Activated CD4-positive, alpha-beta T cell treated with anti-CD3 and anti-CD28 coated beads for 36 hours (primary cell): ENCODE measurements at regions of chr9 and their contacts with region 1.

Region 1: DNA sequence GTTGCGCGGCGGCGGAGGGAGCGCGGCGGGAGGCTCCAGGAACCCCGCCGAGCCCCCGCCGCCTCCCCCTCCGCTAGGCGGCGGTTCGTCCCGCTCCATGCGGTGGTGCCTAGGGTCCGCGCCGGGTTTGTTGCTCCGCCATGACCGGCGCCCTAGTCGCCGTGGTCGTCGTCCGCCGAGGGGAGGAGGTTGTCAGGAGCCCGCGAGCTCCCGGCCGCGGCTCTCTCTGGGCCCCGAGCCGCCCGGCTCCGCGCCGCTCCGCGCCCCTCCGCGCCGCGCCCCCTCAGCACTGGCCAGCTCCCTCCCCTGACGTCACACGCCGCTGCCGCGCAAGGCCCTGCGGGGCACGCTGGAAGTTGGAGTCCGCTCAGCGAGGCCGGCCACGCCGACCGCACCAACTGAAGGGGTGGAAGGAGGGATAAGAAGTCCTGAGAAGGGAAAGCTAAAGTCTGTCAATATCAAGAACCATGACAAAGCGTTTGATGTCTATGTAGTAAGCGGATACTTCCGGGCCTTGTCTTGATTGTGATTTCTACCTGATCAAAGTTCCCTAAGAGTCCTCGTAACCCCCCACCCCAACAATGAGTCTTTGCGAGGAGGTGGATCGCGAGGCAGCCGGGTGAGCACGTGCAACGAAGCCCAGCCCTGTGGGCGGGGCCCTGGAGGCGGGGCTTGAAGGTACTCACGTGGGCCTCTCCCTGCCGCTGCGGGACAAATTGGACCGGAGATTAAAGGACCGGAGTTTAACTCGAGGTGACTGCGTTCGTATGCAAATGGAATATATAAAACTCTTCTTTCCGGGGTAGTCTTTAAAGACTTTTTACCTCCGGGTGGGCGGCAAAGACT is at the start of gene NR6A1:
- DNase-seq: peak; percentile 97
- ATAC-seq: peak; percentile 90
- H3K4me3 Mint-ChIP-seq: peak within 1 kb of the TSS; percentile 80
- H3K27ac Mint-ChIP-seq: peak within 1 kb of the TSS; percentile 74
- H3K4me1 Mint-ChIP-seq: peaks cover 29% of the 10 kb centered on the region
- H3K27me3 Mint-ChIP-seq: peaks cover 62% of the 10 kb centered on the region
- total RNA-seq, gene NR6A1: 0.82 to 1.1 TPM

Region 2: GRCh38 chr9:124415102-124415851 is 356.0 kb before region 1 on chr9 and contains the start of gene PSMB7:
- CTCF ChIA-PET with region 1: no interaction called
- POLR2A ChIA-PET with region 1: no interaction called
- intact Hi-C with region 1: loop called in 1 of 2 experiments (anchors 1 kb)
- DNase-seq: peak; percentile 99
- ATAC-seq: peak; percentile 94
- H3K4me3 Mint-ChIP-seq: peak within 1 kb of the TSS; percentile 93
- H3K27ac Mint-ChIP-seq: peak within 1 kb of the TSS; percentile 89
- H3K4me1 Mint-ChIP-seq: peaks cover 43% of the 10 kb centered on the region
- H3K27me3 Mint-ChIP-seq: no peaks in the 10 kb centered on the region
- total RNA-seq, gene PSMB7: 143 to 164 TPM

Region 3: GRCh38 chr9:124645274-124645673 is 126.0 kb before region 1 on chr9:
- CTCF ChIA-PET with region 1: no interaction called
- POLR2A ChIA-PET with region 1: no interaction called
- intact Hi-C with region 1: no loop called
- DNase-seq: no peak
- ATAC-seq: no peak
- H3K4me3 Mint-ChIP-seq: no peak overlapping the region
- H3K27ac Mint-ChIP-seq: no peak overlapping the region
- H3K4me1 Mint-ChIP-seq: no peaks in the 10 kb centered on the region
- H3K27me3 Mint-ChIP-seq: peaks cover 3% of the 10 kb centered on the region

Region 4: GRCh38 chr9:124852829-124853531 is 81.7 kb after region 1 on chr9 and contains the start of gene WDR38:
- CTCF ChIA-PET with region 1: interaction called, 260 read pairs
- POLR2A ChIA-PET with region 1: interaction called, 8 read pairs
- intact Hi-C with region 1: loop called (anchors 1 kb)
- DNase-seq: peak; percentile 85
- ATAC-seq: peak; percentile 88
- H3K4me3 Mint-ChIP-seq: peak within 1 kb of the TSS; percentile 46
- H3K27ac Mint-ChIP-seq: no peak within 1 kb of the TSS
- H3K4me1 Mint-ChIP-seq: peaks cover 16% of the 10 kb centered on the region
- H3K27me3 Mint-ChIP-seq: peaks cover 10% of the 10 kb centered on the region
- total RNA-seq, gene WDR38: not detected

Region 5: DNA sequence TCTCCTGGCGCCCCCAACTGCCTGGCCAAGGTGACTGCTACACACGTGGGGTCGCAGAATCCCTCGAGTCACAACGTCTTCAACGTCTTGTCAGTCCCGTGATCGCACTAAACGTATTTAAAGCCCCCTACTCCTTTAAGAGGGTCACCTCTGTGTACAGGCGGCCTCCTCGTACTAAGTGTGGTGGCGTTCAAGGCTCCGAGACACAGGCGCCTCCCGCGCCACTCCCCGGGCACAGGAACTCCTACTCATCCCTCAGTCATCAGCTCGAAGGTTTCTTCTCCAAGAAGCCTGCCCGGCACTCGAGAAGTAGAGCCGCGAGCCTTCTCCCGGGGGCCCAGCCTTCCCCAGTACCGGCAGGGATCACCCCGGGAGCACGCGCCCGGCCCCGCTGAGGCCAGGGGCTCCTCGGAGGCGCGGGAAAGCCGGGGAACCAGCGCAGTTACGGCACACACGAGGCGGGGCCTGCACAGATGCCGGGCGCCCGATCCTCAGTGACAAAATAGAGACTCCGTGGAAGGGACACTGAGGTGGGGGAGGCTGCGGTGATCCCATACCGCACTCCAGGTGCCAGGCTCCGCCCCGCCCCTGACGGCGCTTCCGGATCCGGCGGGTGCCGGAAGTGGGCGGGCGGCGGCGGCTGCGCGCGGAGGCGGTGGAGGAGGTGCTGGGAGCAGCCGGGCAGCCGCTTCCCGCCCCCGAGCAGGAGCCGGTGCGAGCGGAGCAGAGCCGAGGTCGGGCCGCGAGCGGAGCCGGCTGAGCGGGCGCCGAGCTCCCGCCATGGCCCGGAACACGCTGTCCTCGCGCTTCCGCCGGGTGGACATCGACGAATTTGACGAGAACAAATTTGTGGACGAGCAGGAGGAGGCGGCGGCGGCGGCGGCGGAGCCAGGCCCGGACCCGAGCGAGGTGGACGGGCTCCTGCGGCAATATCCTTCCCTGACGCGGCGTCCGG is 97.5 kb after region 1 on chr9:
- CTCF ChIA-PET with region 1: interaction called, 6 read pairs
- POLR2A ChIA-PET with region 1: interaction called, 4 read pairs
- intact Hi-C with region 1: loop called in 1 of 2 experiments (anchors 1 kb)
- DNase-seq: peak; percentile 96
- ATAC-seq: peak; percentile 59
- H3K4me3 Mint-ChIP-seq: peak overlapping the region; percentile 98
- H3K27ac Mint-ChIP-seq: peak overlapping the region; percentile 98
- H3K4me1 Mint-ChIP-seq: peaks cover 42% of the 10 kb centered on the region
- H3K27me3 Mint-ChIP-seq: no peaks in the 10 kb centered on the region

Region 6: DNA sequence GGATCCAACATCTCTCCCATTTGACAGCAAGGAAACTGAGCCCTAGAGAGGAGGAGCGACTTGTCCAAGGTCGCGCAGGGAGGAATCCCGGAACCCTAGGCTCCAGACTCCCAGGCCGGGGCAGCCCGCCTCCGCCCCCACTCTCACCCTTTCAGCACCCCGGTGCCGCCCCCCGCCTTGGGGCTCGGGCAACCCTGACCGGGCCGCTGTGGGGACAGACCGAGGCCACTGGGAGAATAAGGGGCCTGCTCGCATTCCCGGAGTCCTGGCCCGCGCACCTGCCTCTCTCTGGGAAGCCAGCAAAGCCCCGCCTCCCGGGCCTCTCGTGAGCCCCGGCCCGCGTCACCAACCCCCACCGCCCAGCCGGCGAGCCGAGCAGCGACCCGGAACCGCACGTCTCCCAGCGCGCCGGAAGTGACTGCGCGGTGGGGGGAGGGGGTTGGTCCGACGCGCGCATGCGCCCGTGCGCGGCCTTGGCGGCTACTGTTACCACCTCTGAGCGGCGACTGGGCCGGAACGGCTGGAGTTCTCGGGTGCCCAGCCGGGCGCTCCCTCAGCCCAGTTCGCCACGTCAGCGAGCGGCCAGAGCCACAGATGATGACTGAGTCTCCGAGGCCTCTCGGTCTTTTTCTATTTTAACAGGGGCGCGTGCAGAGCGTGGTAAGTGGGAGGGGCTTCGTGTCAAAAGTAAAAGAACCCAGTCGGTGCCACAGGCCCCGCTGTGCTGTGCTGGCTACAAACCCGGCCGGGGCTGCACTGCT is 169.6 kb after region 1 on chr9 and contains the start of gene GOLGA1:
- CTCF ChIA-PET with region 1: interaction called, 3 read pairs
- POLR2A ChIA-PET with region 1: no interaction called
- intact Hi-C with region 1: loop called in 1 of 2 experiments (anchors 1 kb)
- DNase-seq: peak; percentile 96
- ATAC-seq: peak; percentile 89
- H3K4me3 Mint-ChIP-seq: peak within 1 kb of the TSS; percentile 93
- H3K27ac Mint-ChIP-seq: peak within 1 kb of the TSS; percentile 99
- H3K4me1 Mint-ChIP-seq: peaks cover 20% of the 10 kb centered on the region
- H3K27me3 Mint-ChIP-seq: no peaks in the 10 kb centered on the region
- total RNA-seq, gene GOLGA1: 17.4 to 18.3 TPM

Region 7: DNA sequence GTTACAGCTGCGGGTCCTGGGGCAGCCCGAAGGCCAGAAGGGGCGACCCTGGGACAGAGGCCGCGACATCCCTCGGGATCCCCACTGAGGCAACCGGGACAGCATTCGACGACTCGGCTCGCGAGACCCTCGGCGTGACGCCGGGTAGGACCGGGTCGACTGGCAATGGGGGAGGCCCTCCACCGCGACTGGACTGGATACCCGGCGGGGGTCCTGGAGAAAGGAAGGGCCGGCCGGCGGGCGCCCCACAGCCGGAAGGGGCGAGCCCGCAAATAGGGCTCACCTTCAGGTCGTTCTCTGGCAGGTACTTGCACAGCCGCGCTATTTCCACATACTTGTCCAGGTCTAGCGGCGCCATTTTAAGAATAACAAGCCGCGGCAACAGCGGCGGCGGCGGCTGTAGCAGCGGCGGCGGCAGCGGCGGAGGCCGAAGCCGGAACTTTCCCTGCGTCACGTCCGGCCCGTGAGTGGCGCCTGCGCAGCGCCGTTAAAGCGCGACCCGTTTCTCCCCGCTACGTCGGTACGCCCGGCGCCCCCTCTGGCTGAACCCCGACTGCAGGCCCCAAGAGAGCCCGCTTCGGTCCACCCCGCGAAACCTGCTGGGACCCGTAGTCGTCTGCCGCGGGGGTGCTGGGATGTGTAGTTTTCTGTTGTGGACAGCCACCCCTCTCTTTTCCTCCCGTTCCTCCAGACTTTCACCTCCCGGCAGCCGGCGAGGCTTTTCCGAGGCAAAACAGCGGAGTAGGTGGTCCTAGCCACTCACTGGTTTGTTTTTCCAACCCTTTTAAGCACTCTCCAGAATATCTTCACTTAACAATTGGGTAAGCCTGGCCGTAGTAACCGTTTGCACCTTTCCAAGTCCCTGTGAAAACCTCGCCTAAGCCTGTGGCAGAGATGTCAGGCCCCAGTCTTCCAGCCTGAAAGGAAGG is 418.4 kb after region 1 on chr9 and contains the start of gene PPP6C:
- CTCF ChIA-PET with region 1: no interaction called
- POLR2A ChIA-PET with region 1: no interaction called
- intact Hi-C with region 1: loop called in 1 of 2 experiments (anchors 1 kb)
- DNase-seq: peak; percentile 99
- ATAC-seq: peak; percentile 96
- H3K4me3 Mint-ChIP-seq: peak within 1 kb of the TSS; percentile 83
- H3K27ac Mint-ChIP-seq: peak within 1 kb of the TSS; percentile 86
- H3K4me1 Mint-ChIP-seq: peaks cover 69% of the 10 kb centered on the region
- H3K27me3 Mint-ChIP-seq: no peaks in the 10 kb centered on the region
- total RNA-seq, gene PPP6C: 35.1 to 47.3 TPM

Region 8: DNA sequence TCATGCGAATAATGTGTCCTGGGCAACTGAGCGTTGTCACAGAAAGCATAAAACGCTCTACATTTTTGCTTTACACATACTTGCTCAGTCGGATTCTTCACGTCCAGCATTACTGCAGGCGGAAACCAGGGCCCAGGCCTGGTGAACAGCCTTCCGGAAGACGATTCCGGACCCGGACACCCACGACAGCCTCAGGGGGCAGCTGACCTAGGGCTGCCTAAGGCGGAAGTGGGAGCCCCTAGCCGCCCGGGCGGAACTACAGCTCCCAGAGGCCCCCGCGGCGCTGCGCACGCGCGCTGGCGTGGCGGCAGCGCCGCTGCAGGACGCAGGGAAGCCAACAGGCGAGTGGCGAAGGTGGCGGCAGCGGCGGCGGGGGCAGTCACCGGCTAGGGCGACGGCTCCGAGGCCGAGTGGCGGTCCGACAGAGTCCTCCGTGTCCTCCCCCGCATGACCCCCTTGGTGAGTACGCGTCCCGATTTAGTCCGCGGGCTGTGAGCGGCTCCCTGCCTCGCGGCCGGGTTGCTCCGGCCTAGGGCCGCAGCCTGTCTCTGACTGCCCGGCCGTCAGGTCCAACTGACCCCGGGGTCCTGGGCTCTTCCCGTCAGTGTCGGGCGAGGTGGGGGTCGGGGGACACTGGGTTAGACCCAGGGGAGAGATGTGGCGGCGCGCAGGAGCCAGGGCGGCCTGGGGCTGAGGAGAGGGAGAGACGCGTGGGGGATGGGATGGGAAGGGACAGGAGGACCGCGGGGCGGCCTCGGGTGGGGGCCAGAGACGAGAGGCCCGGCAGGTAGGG is 490.5 kb after region 1 on chr9 and contains the start of gene GAPVD1:
- CTCF ChIA-PET with region 1: no interaction called
- POLR2A ChIA-PET with region 1: no interaction called
- intact Hi-C with region 1: loop called in 1 of 2 experiments (anchors 1 kb)
- DNase-seq: peak; percentile 94
- ATAC-seq: peak; percentile 99
- H3K4me3 Mint-ChIP-seq: peak within 1 kb of the TSS; percentile 99
- H3K27ac Mint-ChIP-seq: peak within 1 kb of the TSS; percentile 96
- H3K4me1 Mint-ChIP-seq: peaks cover 43% of the 10 kb centered on the region
- H3K27me3 Mint-ChIP-seq: no peaks in the 10 kb centered on the region
- total RNA-seq, gene GAPVD1: 41.6 to 47.7 TPM

Region 9: DNA sequence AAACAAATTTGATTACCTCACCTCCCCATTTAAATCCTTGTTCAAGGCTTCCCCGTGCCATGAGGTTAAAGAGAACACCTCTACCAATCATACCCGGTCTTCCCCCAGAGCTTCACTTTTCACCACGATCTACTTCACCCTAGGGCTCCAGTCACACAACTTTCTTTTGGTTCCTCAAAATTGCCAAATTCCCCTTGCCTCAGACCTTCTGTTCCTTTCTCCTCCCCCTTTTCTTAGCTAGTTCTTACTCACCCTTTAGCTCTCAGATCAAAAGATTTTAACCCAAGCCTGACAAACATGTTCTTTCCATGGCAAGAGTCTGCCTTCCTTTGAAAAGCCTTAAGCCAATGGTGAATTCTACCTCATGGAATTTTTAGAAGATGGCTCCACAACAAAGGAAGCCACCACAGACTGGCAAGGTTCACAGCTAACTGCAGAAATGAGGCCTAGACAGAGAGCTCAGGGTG is 879.1 kb after region 1 on chr9:
- CTCF ChIA-PET with region 1: no interaction called
- POLR2A ChIA-PET with region 1: no interaction called
- intact Hi-C with region 1: no loop called
- DNase-seq: peak; percentile 39
- ATAC-seq: peak; percentile 89
- H3K4me3 Mint-ChIP-seq: peak overlapping the region; percentile 55
- H3K27ac Mint-ChIP-seq: peak overlapping the region; percentile 87
- H3K4me1 Mint-ChIP-seq: peaks cover 71% of the 10 kb centered on the region
- H3K27me3 Mint-ChIP-seq: no peaks in the 10 kb centered on the region